Upper lobe of right lung (tissue), 1 donor: ENCODE measurements at regions of chr20 and their contacts with region 1.

Region 1: GRCh38 chr20:353166-353565 is 6.3 kb downstream of the NRSN2 start:
- DNase-seq: no peak
- ATAC-seq: no peak
- H3K4me3 ChIP-seq: no peak overlapping the region
- H3K27ac ChIP-seq: no peak overlapping the region
- H3K4me1 ChIP-seq: peaks cover 9% of the 10 kb centered on the region
- H3K27me3 ChIP-seq: no peaks in the 10 kb centered on the region
- CTCF ChIP-seq: no peak

Region 2: DNA sequence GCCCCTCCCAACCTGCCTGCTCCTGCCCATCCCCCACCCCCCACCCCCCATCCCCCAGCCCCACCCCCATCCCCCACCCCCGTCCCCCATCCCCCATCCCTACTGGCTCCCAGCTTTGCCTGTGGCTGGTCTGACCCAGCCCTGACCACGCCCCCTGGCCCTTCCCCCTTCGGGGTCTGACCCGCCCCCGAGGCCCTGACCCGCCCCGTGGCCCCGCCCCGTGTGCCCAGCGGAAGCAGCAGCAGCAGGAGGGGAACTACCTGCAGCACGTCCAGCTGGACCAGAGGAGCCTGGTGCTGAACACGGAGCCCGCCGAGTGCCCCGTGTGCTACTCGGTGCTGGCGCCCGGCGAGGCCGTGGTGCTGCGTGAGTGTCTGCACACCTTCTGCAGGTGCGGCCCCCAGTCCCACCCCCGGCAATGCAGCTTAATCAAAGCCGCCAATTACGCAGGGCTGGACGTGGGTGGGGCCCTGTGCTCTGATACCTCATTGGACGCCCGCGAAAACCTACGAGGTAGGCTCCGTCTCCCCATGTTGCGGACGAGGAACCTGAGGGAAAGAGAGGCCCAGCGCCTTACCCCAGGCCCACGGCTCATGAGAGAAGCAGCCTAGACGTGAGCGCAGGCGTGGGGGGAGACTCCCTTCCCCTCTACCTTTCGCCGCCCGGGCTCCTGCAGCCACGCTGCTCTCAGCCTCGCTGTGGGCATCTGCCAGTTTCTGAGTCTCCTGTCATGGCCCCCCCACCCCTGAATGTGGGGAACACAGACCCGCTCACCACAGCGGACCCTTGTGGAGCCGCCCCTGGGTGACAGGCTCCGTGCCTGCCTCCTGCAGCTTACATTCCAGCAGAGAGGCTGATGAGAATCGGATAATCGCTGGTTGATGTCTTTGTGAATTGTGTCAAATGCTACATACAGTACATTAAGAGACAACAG is 67.7 kb after region 1 on chr20:
- intact Hi-C with region 1: no loop called
- DNase-seq: no peak
- ATAC-seq: peak; percentile 55
- H3K4me3 ChIP-seq: no peak overlapping the region
- H3K27ac ChIP-seq: no peak overlapping the region
- H3K4me1 ChIP-seq: no peaks in the 10 kb centered on the region
- H3K27me3 ChIP-seq: no peaks in the 10 kb centered on the region
- CTCF ChIP-seq: no peak

Region 3: GRCh38 chr20:478949-479429 is 125.8 kb after region 1 on chr20:
- intact Hi-C with region 1: loop called (anchors 2 kb)
- DNase-seq: no peak
- ATAC-seq: peak; percentile 72
- H3K4me3 ChIP-seq: no peak overlapping the region
- H3K27ac ChIP-seq: no peak overlapping the region
- H3K4me1 ChIP-seq: no peaks in the 10 kb centered on the region
- H3K27me3 ChIP-seq: no peaks in the 10 kb centered on the region
- CTCF ChIP-seq: peak; percentile 69